SK-N-SH (cell line): ENCODE measurements at regions of chr7 and their contacts with region 1.

Region 1: GRCh38 chr7:2863461-2864066 is 19.5 kb upstream of the GNA12 start:
- DNase-seq: peak; percentile 48
- H3K4me3 ChIP-seq: no peak overlapping the region
- H3K27ac ChIP-seq: peak overlapping the region in 1 of 2 experiments; percentile 82; a peak in 2 of 4 replicates
- H3K4me1 ChIP-seq: peaks cover 3 to 13% of the 10 kb centered on the region in 2 experiments; a peak in 3 of 4 replicates
- H3K27me3 ChIP-seq: no peaks in the 10 kb centered on the region
- CTCF ChIP-seq: no peak
- EP300 ChIP-seq: no peak; a peak in 1 of 4 replicates
- RAD21 ChIP-seq: no peak

Region 2: DNA sequence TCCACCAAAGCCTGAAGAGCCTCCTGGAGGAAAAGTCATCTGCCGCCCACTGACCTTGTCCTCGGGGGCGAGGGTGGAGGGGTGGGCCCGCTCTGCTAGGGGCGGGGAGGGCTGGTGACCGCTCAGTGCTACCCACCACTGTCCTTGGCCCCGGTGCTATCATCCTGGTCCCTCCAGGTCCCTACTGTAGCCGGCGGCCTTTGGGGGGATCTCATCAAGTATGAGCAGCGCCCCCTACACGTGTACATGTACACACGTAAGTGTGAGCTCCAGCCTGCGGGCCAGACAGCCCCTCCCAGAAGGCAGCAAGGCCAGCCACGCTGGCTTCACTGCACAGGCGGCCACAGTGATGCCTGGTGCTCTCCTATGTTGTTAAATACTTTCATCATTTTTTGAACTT is 212.2 kb before region 1 on chr7:
- CTCF ChIA-PET with region 1: no interaction called
- POLR2A ChIA-PET with region 1: no interaction called
- DNase-seq: no peak
- H3K4me3 ChIP-seq: no peak overlapping the region
- H3K27ac ChIP-seq: no peak overlapping the region
- H3K4me1 ChIP-seq: peaks cover 0 to 23% of the 10 kb centered on the region in 2 experiments; a peak in 1 of 4 replicates
- H3K27me3 ChIP-seq: no peaks in the 10 kb centered on the region
- CTCF ChIP-seq: peak; percentile 36
- EP300 ChIP-seq: no peak
- RAD21 ChIP-seq: no peak

Region 3: DNA sequence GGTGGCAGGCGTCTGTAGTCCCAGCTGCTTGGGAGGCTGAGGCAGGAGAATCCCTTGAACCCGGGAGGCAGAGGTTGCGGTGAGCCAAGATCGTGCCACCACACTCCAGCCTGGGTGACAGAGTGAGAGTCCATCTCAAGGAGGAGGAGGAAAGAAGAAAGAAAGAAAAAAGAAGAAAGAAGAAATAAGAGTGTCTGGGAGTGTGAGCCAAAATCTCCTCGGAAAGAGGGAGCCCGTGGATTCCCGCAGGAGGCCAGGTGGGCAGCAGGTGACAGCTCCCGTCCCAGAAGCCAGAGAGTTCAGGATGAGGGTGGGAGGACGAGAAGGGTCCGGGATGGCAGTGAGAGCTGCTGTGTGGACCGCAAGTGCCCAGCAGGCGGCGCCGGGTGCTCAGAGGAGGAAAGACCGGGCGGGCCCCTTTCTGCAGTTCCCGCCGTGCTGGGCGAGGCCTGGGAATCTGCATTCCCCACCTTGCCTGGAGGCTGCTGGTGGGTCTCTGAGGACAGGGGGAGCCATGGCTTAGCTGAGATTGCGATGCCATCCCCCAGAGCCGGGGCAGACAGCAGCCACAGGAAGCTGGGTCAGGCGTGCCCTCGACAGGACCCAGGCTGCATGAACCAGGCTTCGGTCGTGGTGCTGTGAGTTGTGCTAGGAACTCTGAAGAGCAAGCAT is 192.7 kb before region 1 on chr7:
- CTCF ChIA-PET with region 1: interaction called, 22 read pairs
- POLR2A ChIA-PET with region 1: no interaction called
- DNase-seq: peak; percentile 96
- H3K4me3 ChIP-seq: no peak overlapping the region; a peak in 1 of 4 replicates
- H3K27ac ChIP-seq: no peak overlapping the region
- H3K4me1 ChIP-seq: peaks cover 0 to 3% of the 10 kb centered on the region in 2 experiments; a peak in 1 of 4 replicates
- H3K27me3 ChIP-seq: no peaks in the 10 kb centered on the region
- CTCF ChIP-seq: peak; percentile 97
- EP300 ChIP-seq: no peak
- RAD21 ChIP-seq: peak; percentile 93

Region 4: GRCh38 chr7:2834743-2835451 is 28.7 kb before region 1 on chr7:
- CTCF ChIA-PET with region 1: interaction called, 10 read pairs
- POLR2A ChIA-PET with region 1: no interaction called
- DNase-seq: no peak
- H3K4me3 ChIP-seq: no peak overlapping the region
- H3K27ac ChIP-seq: no peak overlapping the region
- H3K4me1 ChIP-seq: peaks cover 5% of the 10 kb centered on the region in 2 experiments; a peak in 3 of 4 replicates
- H3K27me3 ChIP-seq: no peaks in the 10 kb centered on the region
- CTCF ChIP-seq: no peak
- EP300 ChIP-seq: no peak
- RAD21 ChIP-seq: no peak

Region 5: DNA sequence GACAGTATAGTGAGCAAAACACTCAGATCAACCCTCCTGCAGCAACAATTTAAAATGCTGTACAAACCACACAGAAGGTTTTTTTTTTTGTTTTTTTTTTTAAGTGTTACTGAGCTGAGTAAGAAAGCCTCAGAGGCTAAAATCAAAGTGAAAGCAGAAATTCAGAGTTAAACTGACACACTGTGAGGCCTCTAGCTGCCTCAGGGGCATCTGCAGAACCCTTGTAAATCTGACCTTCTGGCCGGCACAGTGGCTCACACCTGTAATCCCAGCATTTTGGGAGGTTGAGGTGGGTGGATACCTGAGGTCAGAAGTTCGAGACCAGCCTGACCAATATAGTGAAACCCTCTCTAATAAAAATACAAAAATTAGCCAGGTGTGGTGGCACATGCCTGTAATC is 12.1 kb before region 1 on chr7:
- CTCF ChIA-PET with region 1: interaction called, 29 read pairs
- POLR2A ChIA-PET with region 1: no interaction called
- DNase-seq: no peak
- H3K4me3 ChIP-seq: no peak overlapping the region
- H3K27ac ChIP-seq: no peak overlapping the region
- H3K4me1 ChIP-seq: no peaks in the 10 kb centered on the region
- H3K27me3 ChIP-seq: no peaks in the 10 kb centered on the region
- CTCF ChIP-seq: no peak
- EP300 ChIP-seq: no peak
- RAD21 ChIP-seq: no peak

Region 6: GRCh38 chr7:2880874-2881533 is 17.4 kb after region 1 on chr7:
- CTCF ChIA-PET with region 1: interaction called, 41 read pairs
- POLR2A ChIA-PET with region 1: no interaction called
- DNase-seq: peak; percentile 66
- H3K4me3 ChIP-seq: no peak overlapping the region
- H3K27ac ChIP-seq: no peak overlapping the region
- H3K4me1 ChIP-seq: peaks cover 0 to 5% of the 10 kb centered on the region in 2 experiments; a peak in 1 of 4 replicates
- H3K27me3 ChIP-seq: no peaks in the 10 kb centered on the region
- CTCF ChIP-seq: no peak
- EP300 ChIP-seq: no peak
- RAD21 ChIP-seq: no peak

Region 7: DNA sequence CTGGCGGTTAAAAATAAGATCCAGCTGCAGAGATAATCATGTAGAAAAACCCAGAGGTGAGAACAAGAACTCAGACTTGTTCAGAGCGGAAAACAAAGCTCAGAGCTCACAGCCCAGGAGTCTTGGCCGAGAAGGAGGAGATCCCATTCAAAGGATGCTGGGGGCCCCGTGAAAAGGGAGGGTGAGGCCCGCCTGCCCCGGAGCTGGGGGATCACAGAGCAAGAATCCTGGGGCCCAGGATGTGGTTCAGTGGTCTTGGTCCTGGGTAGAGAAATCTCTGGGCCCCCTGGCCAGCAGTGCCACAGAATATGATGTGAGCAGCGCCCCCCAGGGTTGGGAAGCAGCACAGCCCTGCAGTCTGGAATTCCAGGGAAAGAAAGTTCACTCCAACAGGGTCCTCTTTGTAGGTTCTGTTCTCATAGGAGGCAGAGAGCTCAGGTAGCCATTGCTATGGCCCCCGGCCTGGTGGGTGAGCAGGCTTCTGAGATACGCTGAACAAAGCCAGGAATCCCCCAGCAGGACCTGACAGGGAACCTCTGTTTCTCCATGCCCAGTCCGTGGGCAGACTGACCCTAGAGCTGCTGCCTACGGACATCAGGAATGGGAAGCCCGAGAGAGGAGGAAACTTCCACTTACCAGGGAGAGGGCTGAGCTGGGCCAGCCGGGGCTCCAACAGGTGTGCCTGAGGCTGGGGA is 58.2 kb after region 1 on chr7:
- CTCF ChIA-PET with region 1: interaction called, 15 read pairs
- POLR2A ChIA-PET with region 1: no interaction called
- DNase-seq: peak; percentile 82
- H3K4me3 ChIP-seq: peak overlapping the region in 1 of 2 experiments; percentile 33; a peak in 1 of 4 replicates
- H3K27ac ChIP-seq: 0 out of 4 replicates have a peak overlapping the region, but pooled peaks of 1 of the 2 experiments have one; percentile 7
- H3K4me1 ChIP-seq: peaks cover 0 to 13% of the 10 kb centered on the region in 2 experiments; a peak in 1 of 4 replicates
- H3K27me3 ChIP-seq: peaks cover 9% of the 10 kb centered on the region; the same call in 1 of the 2 replicates
- CTCF ChIP-seq: peak; percentile 56
- EP300 ChIP-seq: no peak
- RAD21 ChIP-seq: peak; percentile 30; the same call in 1 of the 2 replicates

Region 8: GRCh38 chr7:3300651-3301378 is 437.3 kb after region 1 on chr7 and contains the start of gene SDK1:
- CTCF ChIA-PET with region 1: interaction called, 22 read pairs
- POLR2A ChIA-PET with region 1: no interaction called
- DNase-seq: peak; percentile 98
- H3K4me3 ChIP-seq: peak within 1 kb of the TSS; percentile 62 to 63
- H3K27ac ChIP-seq: peak within 1 kb of the TSS in 1 of 2 experiments; percentile 47; a peak in 1 of 4 replicates
- H3K4me1 ChIP-seq: peaks cover 0 to 15% of the 10 kb centered on the region in 2 experiments; a peak in 2 of 4 replicates
- H3K27me3 ChIP-seq: peaks cover 12% of the 10 kb centered on the region; the same call in 1 of the 2 replicates
- CTCF ChIP-seq: peak; percentile 78
- EP300 ChIP-seq: 0 out of 4 replicates have a peak, but pooled peaks of 1 of the 2 experiments have one; percentile 7
- RAD21 ChIP-seq: peak; percentile 85
- polyA plus RNA-seq, gene SDK1: 0.96 and 1.2 TPM in 2 replicates